Endothelial cell of umbilical vein (primary cell): ENCODE measurements at regions of chr6 and their contacts with region 1.

Region 1: GRCh38 chr6:139943391-139943790 is 568.9 kb upstream of the CITED2 start:
- DNase-seq: peak; percentile 93
- H3K4me3 ChIP-seq: no peak overlapping the region
- H3K27ac ChIP-seq: peak overlapping the region; percentile 90
- H3K4me1 ChIP-seq: peaks cover 24% of the 10 kb centered on the region
- H3K27me3 ChIP-seq: no peaks in the 10 kb centered on the region
- CTCF ChIP-seq: no peak
- POLR2A ChIP-seq: no peak

Region 2: GRCh38 chr6:139881728-139882211 is 61.6 kb before region 1 on chr6:
- CTCF ChIA-PET with region 1: no interaction called
- POLR2A ChIA-PET with region 1: no interaction called
- dilution Hi-C with region 1: no loop called
- intact Hi-C with region 1: no loop called
- DNase-seq: peak; percentile 69
- H3K4me3 ChIP-seq: no peak overlapping the region
- H3K27ac ChIP-seq: no peak overlapping the region
- H3K4me1 ChIP-seq: peaks cover 14% of the 10 kb centered on the region
- H3K27me3 ChIP-seq: no peaks in the 10 kb centered on the region
- CTCF ChIP-seq: peak; percentile 42 to 49
- POLR2A ChIP-seq: no peak

Region 3: DNA sequence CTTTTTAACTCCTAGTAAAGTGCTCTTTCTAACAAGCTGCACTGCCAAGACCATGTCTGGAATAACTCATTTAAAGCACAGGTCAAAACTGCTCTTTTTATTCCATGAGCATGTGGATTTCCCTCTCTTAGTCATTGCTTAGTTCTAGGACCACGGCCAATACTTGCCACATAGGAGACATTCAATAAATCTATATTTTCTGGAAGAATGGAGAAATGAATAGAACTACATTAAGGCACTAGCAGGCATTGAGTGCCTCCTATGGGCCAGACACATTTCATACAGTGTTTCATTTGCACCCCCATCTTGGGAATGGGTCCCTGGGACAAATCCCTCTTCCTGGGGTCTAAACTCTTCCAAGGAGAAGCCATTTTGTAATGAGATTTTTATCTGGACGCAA is 16.2 kb before region 1 on chr6:
- CTCF ChIA-PET with region 1: interaction called, 15 read pairs
- POLR2A ChIA-PET with region 1: no interaction called
- dilution Hi-C with region 1: no loop called
- intact Hi-C with region 1: no loop called
- DNase-seq: peak; percentile 22
- H3K4me3 ChIP-seq: no peak overlapping the region
- H3K27ac ChIP-seq: no peak overlapping the region
- H3K4me1 ChIP-seq: no peaks in the 10 kb centered on the region
- H3K27me3 ChIP-seq: no peaks in the 10 kb centered on the region
- CTCF ChIP-seq: no peak
- POLR2A ChIP-seq: no peak